ENCODE measurements at regions of chr18 and their contacts with region 1.

Region 1: DNA sequence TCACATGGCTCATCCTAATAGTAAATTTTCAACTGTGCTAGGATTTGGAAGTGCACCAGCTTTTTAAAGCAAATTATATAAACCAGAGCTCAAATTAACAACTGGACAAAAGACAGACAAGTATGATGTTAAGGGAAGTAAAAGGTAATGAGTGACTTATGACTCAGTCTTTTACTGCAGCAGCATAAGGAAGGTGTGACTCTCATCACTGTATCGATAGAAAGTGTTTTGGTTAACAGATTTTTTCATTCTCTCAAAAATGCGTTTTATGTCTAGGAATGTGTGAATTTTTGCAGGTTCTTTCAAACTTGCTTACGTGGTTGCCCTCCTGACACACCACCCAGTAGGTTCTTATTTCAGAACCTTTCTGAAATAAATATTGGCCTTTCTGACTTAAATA is 244.2 kb upstream of the BOD1L2 start:
- DNase-seq: no peak
- H3K4me3 Mint-ChIP-seq: peak overlapping the region; percentile 25
- H3K27ac Mint-ChIP-seq: peak overlapping the region; percentile 88
- H3K4me1 Mint-ChIP-seq: peaks cover 50% of the 10 kb centered on the region
- H3K27me3 Mint-ChIP-seq: no peaks in the 10 kb centered on the region
- CTCF ChIP-seq: no peak

Region 2: GRCh38 chr18:56945171-56946083 is 42.8 kb after region 1 on chr18:
- CTCF ChIA-PET with region 1: interaction called, 14 read pairs
- intact Hi-C with region 1: no loop called
- DNase-seq: no peak
- H3K4me3 Mint-ChIP-seq: no peak overlapping the region
- H3K27ac Mint-ChIP-seq: no peak overlapping the region
- H3K4me1 Mint-ChIP-seq: peaks cover 17% of the 10 kb centered on the region
- H3K27me3 Mint-ChIP-seq: no peaks in the 10 kb centered on the region
- CTCF ChIP-seq: no peak

Region 3: GRCh38 chr18:57062844-57063243 is 160.2 kb after region 1 on chr18:
- CTCF ChIA-PET with region 1: no interaction called
- intact Hi-C with region 1: no loop called
- DNase-seq: no peak
- H3K4me3 Mint-ChIP-seq: no peak overlapping the region
- H3K27ac Mint-ChIP-seq: no peak overlapping the region
- H3K4me1 Mint-ChIP-seq: peaks cover 6% of the 10 kb centered on the region
- H3K27me3 Mint-ChIP-seq: no peaks in the 10 kb centered on the region
- CTCF ChIP-seq: no peak

Measured in Calu3 (cell line).